Activated naive CD4-positive, alpha-beta T cell treated with anti-CD3 and anti-CD28 coated beads, Interleukin-2, amount 10 ng/mL, durations not matched to agents 7 days and 5 days (primary cell): ENCODE measurements at regions of chr2 and their contacts with region 1.

Region 1: GRCh38 chr2:170873035-170873692 is 55.9 kb upstream of the GORASP2 start:
- DNase-seq: peak; percentile 86
- H3K4me3 Mint-ChIP-seq: peak overlapping the region; percentile 30
- H3K27ac Mint-ChIP-seq: peak overlapping the region; percentile 15
- H3K4me1 Mint-ChIP-seq: peaks cover 28% of the 10 kb centered on the region
- H3K27me3 Mint-ChIP-seq: peaks cover 20% of the 10 kb centered on the region

Region 2: GRCh38 chr2:170822290-170823087 is 50.7 kb before region 1 on chr2:
- CTCF ChIA-PET with region 1: interaction called, 12 read pairs
- DNase-seq: peak; percentile 46
- H3K4me3 Mint-ChIP-seq: peak overlapping the region; percentile 46
- H3K27ac Mint-ChIP-seq: peak overlapping the region; percentile 74
- H3K4me1 Mint-ChIP-seq: peaks cover 49% of the 10 kb centered on the region
- H3K27me3 Mint-ChIP-seq: peaks cover 100% of the 10 kb centered on the region

Region 3: DNA sequence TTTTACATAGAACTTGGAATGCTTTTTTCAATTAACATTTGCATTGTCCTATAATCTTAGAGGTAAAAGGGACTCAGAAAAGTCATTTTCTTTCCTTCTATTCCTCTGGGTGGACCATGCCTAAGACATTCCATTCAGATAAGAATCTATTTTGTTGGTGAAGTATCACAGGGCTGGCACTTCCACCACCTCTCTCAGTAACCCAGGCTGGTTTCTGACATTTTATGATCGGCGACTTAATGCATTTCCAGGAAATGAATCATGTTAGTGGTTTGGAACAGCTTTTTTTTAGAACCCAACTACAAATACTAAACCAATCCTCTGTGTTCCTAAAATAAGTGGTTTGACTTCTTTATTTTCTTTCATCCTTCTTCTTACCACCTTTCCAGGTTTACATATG is 29.5 kb before region 1 on chr2:
- CTCF ChIA-PET with region 1: interaction called, 24 read pairs
- DNase-seq: no peak
- H3K4me3 Mint-ChIP-seq: no peak overlapping the region
- H3K27ac Mint-ChIP-seq: no peak overlapping the region
- H3K4me1 Mint-ChIP-seq: peaks cover 17% of the 10 kb centered on the region
- H3K27me3 Mint-ChIP-seq: peaks cover 13% of the 10 kb centered on the region

Region 4: DNA sequence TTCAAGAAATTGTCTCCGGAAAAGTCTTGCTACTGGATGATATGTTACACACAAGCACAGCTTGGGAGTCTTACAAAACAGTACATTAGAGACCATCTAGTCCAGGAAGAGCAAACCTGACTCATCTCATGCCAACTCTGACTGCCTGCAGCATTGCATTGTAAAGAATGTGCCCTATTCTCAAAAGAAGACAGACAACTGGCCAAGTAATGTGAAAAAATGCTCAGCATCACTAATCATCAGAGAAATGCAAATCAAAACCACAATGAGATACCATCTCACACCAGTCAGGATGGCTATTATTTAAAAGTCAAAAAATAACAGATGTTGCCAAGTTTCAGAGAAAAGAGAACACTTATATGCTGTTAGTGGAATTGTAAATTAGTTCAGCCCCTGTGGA is 13.2 kb after region 1 on chr2:
- CTCF ChIA-PET with region 1: interaction called, 12 read pairs
- DNase-seq: no peak
- H3K4me3 Mint-ChIP-seq: no peak overlapping the region
- H3K27ac Mint-ChIP-seq: no peak overlapping the region
- H3K4me1 Mint-ChIP-seq: no peaks in the 10 kb centered on the region
- H3K27me3 Mint-ChIP-seq: peaks cover 45% of the 10 kb centered on the region

Region 5: GRCh38 chr2:170892391-170892951 is 19.3 kb after region 1 on chr2:
- CTCF ChIA-PET with region 1: interaction called, 12 read pairs
- DNase-seq: no peak
- H3K4me3 Mint-ChIP-seq: no peak overlapping the region
- H3K27ac Mint-ChIP-seq: no peak overlapping the region
- H3K4me1 Mint-ChIP-seq: no peaks in the 10 kb centered on the region
- H3K27me3 Mint-ChIP-seq: peaks cover 11% of the 10 kb centered on the region

Region 6: DNA sequence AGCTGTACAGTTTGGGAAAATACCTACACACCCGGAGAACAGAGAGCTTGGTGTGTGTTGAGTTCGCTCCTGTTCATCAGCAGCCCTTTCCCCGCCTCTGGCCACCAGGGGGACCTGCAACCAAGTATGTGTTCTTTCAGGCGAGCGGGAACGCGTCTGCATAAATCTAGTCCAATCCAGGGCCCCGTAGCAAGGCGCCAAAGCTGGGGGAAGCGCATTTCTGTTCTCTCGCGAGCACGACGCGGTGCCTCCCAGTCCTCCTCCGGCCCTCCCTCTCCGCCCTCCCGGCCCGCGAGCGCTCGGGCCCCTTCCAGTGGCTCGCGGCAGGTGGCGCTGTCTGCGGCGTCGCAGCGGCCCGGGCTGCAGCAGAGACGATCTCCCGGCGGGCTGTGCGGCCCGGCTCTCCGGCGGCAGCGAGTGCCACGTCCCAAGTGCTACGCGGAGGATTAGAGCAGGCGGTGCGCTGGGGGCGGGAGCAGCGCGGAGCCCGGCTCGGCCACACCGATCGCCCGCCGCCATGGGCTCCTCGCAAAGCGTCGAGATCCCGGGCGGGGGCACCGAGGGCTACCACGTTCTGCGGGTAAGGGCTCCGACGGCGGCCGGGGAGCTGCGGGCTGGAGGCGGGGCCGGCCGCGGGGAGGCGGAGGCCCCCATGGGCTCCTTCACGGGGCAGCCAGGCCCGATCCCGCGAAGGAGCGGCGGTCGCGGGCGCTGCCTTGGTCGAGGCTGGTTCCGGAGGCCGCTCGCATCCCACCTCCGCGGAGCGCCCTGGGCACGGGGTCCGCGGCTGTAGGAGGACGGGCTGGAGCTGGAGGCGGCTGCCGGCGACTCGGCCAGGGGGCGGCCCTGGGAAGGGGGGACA is 55.9 kb after region 1 on chr2 and contains the start of gene GORASP2:
- CTCF ChIA-PET with region 1: interaction called, 15 read pairs
- DNase-seq: peak; percentile 99
- H3K4me3 Mint-ChIP-seq: peak within 1 kb of the TSS; percentile 94
- H3K27ac Mint-ChIP-seq: peak within 1 kb of the TSS; percentile 97
- H3K4me1 Mint-ChIP-seq: peaks cover 40% of the 10 kb centered on the region
- H3K27me3 Mint-ChIP-seq: peaks cover 6% of the 10 kb centered on the region